GM12878 (cell line): ENCODE measurements at regions of chr13 and their contacts with region 1.

Region 1: GRCh38 chr13:99442273-99442895 is 58.9 kb upstream of the TM9SF2 start:
- DNase-seq: no peak
- ATAC-seq: peak; percentile 77
- H3K4me3 ChIP-seq: no peak overlapping the region
- H3K27ac ChIP-seq: no peak overlapping the region
- H3K4me1 ChIP-seq: 0 out of 2 replicates have a peak, but pooled peaks cover 2% of the 10 kb centered on the region
- H3K27me3 ChIP-seq: peaks cover 2 to 4% of the 10 kb centered on the region in 2 experiments; a peak in 2 of 4 replicates
- CTCF ChIP-seq: peak; percentile 81 to 93 (median 88)
- EP300 ChIP-seq: no peak
- POLR2A ChIP-seq: no peak
- RAD21 ChIP-seq: peak; percentile 96

Region 2: DNA sequence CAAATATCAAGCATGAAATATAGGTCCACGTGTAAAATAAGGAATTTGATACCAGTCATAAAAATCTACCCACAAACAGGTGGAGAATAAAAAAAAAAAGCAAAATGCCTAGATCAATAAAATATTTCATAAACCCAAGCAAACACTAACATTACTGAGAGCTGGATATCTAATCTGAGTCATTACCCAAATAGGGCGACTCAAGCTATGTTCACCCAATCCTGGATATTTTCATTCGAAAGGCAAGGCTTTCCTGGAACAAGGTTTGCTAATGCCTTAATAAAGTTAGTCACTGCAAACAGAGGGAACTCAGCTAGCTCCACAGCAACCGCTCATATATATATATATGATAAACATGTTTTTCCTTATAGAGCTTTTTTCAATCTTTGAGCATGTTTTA is 25.4 kb after region 1 on chr13:
- CTCF ChIA-PET with region 1: interaction called, 13 read pairs
- POLR2A ChIA-PET with region 1: interaction called, 4 read pairs
- RAD21 ChIA-PET with region 1: no interaction called
- SMC1A ChIA-PET with region 1: interaction called, 3 read pairs
- in situ Hi-C with region 1: no loop called
- intact Hi-C with region 1: no loop called
- DNase-seq: no peak
- ATAC-seq: no peak
- H3K4me3 ChIP-seq: no peak overlapping the region
- H3K27ac ChIP-seq: no peak overlapping the region
- H3K4me1 ChIP-seq: no peaks in the 10 kb centered on the region
- H3K27me3 ChIP-seq: no peaks in the 10 kb centered on the region; a peak in 1 of 4 replicates
- CTCF ChIP-seq: no peak
- EP300 ChIP-seq: no peak
- POLR2A ChIP-seq: no peak
- RAD21 ChIP-seq: no peak

Region 3: GRCh38 chr13:99542788-99543406 is 100.5 kb after region 1 on chr13:
- CTCF ChIA-PET with region 1: no interaction called
- POLR2A ChIA-PET with region 1: no interaction called
- RAD21 ChIA-PET with region 1: no interaction called
- SMC1A ChIA-PET with region 1: no interaction called
- in situ Hi-C with region 1: no loop called
- intact Hi-C with region 1: loop called (anchors 10 kb)
- DNase-seq: peak; percentile 92
- ATAC-seq: peak; percentile 99
- H3K4me3 ChIP-seq: no peak overlapping the region; the same call in 1 of the 2 replicates
- H3K27ac ChIP-seq: peak overlapping the region; percentile 49
- H3K4me1 ChIP-seq: peaks cover 51% of the 10 kb centered on the region
- H3K27me3 ChIP-seq: no peaks in the 10 kb centered on the region
- CTCF ChIP-seq: no peak
- EP300 ChIP-seq: peak; percentile 80 to 97
- POLR2A ChIP-seq: peak; percentile 50; the same call in 1 of the 2 replicates
- RAD21 ChIP-seq: no peak

Region 4: DNA sequence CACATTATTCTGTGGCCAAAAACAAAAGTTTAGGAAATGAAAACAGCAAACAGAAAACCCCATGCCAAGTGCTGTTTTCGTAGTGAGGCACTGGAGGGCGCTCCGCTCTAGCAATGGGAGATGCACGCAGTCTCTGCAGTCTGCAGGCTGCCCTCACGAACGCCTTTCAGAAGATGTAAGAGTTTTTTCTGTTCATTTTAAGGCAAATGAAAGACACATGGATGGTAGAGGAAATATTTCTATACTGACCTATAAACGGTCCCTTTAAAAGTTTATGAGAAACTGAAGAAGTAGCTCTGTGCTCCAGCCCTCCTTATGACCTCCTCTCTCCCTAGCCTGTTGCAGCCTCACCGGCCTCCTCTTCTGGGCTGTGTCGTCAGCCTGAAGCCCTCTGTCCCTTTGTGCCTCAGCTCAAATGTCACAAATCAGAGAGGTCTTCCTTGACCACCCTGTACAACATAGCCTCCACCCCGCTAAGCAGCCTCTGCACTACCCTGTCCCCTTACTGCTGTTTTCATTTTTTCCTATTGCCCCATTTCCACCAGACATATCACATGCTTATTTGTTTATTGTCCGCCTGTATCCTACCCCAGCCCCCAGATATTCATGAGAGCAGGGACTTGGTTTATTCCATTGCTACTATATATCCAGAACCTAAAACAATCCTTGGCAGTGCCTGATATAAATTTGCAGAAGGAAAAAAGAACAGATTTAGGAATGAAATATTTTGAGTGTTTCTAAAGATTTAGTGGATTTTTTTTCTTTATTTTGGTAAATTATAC is 175.3 kb after region 1 on chr13:
- CTCF ChIA-PET with region 1: interaction called, 7 read pairs
- POLR2A ChIA-PET with region 1: no interaction called
- RAD21 ChIA-PET with region 1: no interaction called
- SMC1A ChIA-PET with region 1: no interaction called
- in situ Hi-C with region 1: no loop called
- intact Hi-C with region 1: loop called (anchors 1 kb)
- DNase-seq: no peak
- ATAC-seq: peak; percentile 85
- H3K4me3 ChIP-seq: no peak overlapping the region
- H3K27ac ChIP-seq: no peak overlapping the region
- H3K4me1 ChIP-seq: no peaks in the 10 kb centered on the region
- H3K27me3 ChIP-seq: no peaks in the 10 kb centered on the region; a peak in 1 of 4 replicates
- CTCF ChIP-seq: peak; percentile 65 to 81 (median 74)
- EP300 ChIP-seq: no peak
- POLR2A ChIP-seq: no peak
- RAD21 ChIP-seq: peak; percentile 62

Region 5: GRCh38 chr13:99916366-99917103 is 474.2 kb after region 1 on chr13:
- CTCF ChIA-PET with region 1: no interaction called
- POLR2A ChIA-PET with region 1: no interaction called
- RAD21 ChIA-PET with region 1: no interaction called
- SMC1A ChIA-PET with region 1: no interaction called
- in situ Hi-C with region 1: no loop called
- intact Hi-C with region 1: loop called (anchors 10 kb)
- DNase-seq: peak; percentile 31
- ATAC-seq: peak; percentile 95
- H3K4me3 ChIP-seq: no peak overlapping the region
- H3K27ac ChIP-seq: no peak overlapping the region
- H3K4me1 ChIP-seq: no peaks in the 10 kb centered on the region
- H3K27me3 ChIP-seq: no peaks in the 10 kb centered on the region
- CTCF ChIP-seq: peak; percentile 91 to 99 (median 93)
- EP300 ChIP-seq: no peak
- POLR2A ChIP-seq: no peak
- RAD21 ChIP-seq: peak; percentile 86